ENCODE measurements at regions of chr10 and their contacts with region 1.

Region 1: DNA sequence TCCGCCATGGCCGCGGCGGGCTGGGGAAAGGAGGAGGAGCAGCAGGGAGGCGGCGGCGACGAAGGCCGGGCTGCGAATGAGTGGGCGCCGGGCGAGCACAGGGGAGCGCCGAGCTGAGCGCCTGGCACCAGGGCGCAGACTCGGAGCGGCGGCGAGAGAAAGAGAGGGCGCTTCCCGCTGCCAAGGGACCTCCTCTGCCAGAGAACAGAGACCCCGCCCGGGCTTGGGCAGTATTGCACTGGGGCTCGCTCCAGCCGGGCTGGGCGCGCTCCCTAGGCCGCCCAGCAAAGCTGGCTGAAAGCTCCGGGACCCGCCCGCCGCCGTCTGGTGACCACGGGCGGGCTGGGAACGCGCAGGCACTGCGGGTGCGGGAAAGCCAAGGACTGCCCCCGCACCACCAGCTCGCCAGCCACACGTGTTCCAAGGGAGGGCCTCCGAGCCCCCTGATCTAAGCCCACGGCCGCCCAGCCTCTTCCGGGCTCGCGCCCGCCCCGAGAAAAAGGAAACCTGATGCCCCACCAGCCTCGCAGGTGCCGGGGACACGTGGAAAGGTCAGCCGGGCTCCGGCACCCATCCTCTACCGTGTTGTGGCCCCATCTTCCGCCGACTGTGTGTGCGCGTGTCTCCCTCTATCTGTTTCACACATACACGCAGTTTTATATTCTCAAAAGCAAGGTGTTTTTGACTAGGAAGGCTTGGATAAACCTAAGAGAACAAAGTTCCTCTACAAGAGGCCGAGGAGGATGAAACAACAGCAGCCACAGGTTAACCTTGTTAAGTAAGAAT is at the start of gene CCDC6:
- DNase-seq: peak; percentile 97
- H3K4me3 Mint-ChIP-seq: peak within 1 kb of the TSS; percentile 97
- H3K27ac Mint-ChIP-seq: peak within 1 kb of the TSS; percentile 89
- H3K4me1 Mint-ChIP-seq: peaks cover 58% of the 10 kb centered on the region
- H3K27me3 Mint-ChIP-seq: no peaks in the 10 kb centered on the region
- CTCF ChIP-seq: peak; percentile 88
- total RNA-seq, gene CCDC6: 111 and 115 TPM in 2 replicates

Region 2: DNA sequence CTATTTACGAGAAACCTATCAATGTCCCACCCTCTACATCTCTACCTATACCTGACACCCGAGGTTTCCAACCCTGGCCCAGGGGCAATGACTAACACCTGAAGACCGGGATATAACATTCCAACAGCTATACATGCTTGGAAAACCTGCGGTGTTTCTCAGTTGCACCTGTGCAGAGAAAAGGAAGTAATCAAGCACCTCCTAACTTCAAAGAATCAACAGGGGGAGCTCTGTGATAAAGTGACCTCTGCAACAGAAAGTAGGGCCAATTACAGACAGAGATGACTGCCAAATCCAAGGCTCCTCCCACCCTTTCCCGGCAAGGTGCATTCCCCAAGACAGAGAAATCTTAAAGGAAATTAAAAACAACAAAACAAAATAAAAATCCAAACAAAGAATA is 41.5 kb before region 1 on chr10:
- CTCF ChIA-PET with region 1: interaction called, 22 read pairs
- intact Hi-C with region 1: loop called (anchors 1 kb)
- DNase-seq: peak; percentile 71
- H3K4me3 Mint-ChIP-seq: peak overlapping the region; percentile 33
- H3K27ac Mint-ChIP-seq: peak overlapping the region; percentile 21
- H3K4me1 Mint-ChIP-seq: peaks cover 63% of the 10 kb centered on the region
- H3K27me3 Mint-ChIP-seq: no peaks in the 10 kb centered on the region
- CTCF ChIP-seq: peak; percentile 72

Region 3: GRCh38 chr10:59965976-59966650 is 59.5 kb after region 1 on chr10:
- CTCF ChIA-PET with region 1: interaction called, 3 read pairs
- intact Hi-C with region 1: loop called (anchors 1 kb)
- DNase-seq: no peak
- H3K4me3 Mint-ChIP-seq: peak overlapping the region; percentile 8
- H3K27ac Mint-ChIP-seq: peak overlapping the region; percentile 80
- H3K4me1 Mint-ChIP-seq: peaks cover 66% of the 10 kb centered on the region
- H3K27me3 Mint-ChIP-seq: no peaks in the 10 kb centered on the region
- CTCF ChIP-seq: no peak

Region 4: GRCh38 chr10:59991661-59992060 is 85.1 kb after region 1 on chr10:
- CTCF ChIA-PET with region 1: interaction called, 8 read pairs
- intact Hi-C with region 1: loop called (anchors 2 kb)
- DNase-seq: peak; percentile 91
- H3K4me3 Mint-ChIP-seq: peak overlapping the region; percentile 60
- H3K27ac Mint-ChIP-seq: peak overlapping the region; percentile 99
- H3K4me1 Mint-ChIP-seq: peaks cover 65% of the 10 kb centered on the region
- H3K27me3 Mint-ChIP-seq: no peaks in the 10 kb centered on the region
- CTCF ChIP-seq: no peak

Region 5: GRCh38 chr10:60009710-60010383 is 103.2 kb after region 1 on chr10:
- CTCF ChIA-PET with region 1: interaction called, 12 read pairs
- intact Hi-C with region 1: no loop called
- DNase-seq: no peak
- H3K4me3 Mint-ChIP-seq: no peak overlapping the region
- H3K27ac Mint-ChIP-seq: no peak overlapping the region
- H3K4me1 Mint-ChIP-seq: peaks cover 22% of the 10 kb centered on the region
- H3K27me3 Mint-ChIP-seq: no peaks in the 10 kb centered on the region
- CTCF ChIP-seq: no peak

Region 6: DNA sequence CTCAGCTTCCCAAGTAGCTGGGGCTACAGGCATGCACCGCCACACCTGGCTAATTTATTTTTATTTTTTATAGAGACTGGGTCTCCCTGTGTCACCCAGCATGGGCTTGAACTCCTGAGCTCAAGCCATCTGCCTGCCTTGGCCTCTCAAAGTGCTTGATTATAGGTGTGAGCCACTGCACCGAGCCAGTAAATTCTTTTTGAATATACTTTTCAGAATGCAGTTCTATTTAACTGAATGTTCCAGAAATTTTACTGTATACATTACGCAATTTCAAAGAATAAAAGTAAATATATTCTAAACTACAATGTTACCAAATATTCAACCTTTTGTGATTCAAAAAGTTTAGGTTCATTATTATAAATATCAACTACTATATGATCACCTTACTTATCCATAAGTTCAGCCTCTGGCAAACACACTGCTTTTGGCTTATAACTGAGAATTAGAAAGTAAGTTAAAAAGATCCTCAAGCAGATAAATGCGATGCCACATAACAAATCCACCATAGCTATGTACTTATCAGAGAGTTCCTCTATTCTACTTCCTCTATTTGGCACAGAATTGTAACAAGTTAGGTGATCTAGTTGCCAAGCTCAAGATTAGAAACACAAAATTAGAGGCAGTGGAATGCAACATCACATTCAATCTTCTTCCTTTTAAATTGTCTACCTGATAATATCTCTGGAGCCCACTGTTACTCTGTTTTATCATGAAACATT is 364.9 kb after region 1 on chr10:
- CTCF ChIA-PET with region 1: no interaction called
- intact Hi-C with region 1: no loop called
- DNase-seq: no peak
- H3K4me3 Mint-ChIP-seq: no peak overlapping the region
- H3K27ac Mint-ChIP-seq: no peak overlapping the region
- H3K4me1 Mint-ChIP-seq: no peaks in the 10 kb centered on the region
- H3K27me3 Mint-ChIP-seq: no peaks in the 10 kb centered on the region
- CTCF ChIP-seq: no peak